ENCODE measurements at regions of chr6 and their contacts with region 1.

Region 1: GRCh38 chr6:139250296-139251044 is 41.3 kb downstream of the TXLNB start:
- DNase-seq: peak; percentile 55 to 62 (median 60)
- H3K4me3 ChIP-seq: peak overlapping the region in 1 of 2 donors; percentile 1
- H3K4me3 Mint-ChIP-seq: peak overlapping the region; percentile 16 to 90 (median 69)
- H3K27ac ChIP-seq: peak overlapping the region; percentile 40
- H3K27ac Mint-ChIP-seq: peak overlapping the region; percentile 80 to 99 (median 92)
- H3K4me1 ChIP-seq: peaks cover 45% of the 10 kb centered on the region
- H3K4me1 Mint-ChIP-seq: peaks cover 40 to 51% (median 44%) of the 10 kb centered on the region in 4 donors
- H3K27me3 ChIP-seq: no peaks in the 10 kb centered on the region
- H3K27me3 Mint-ChIP-seq: no peaks in the 10 kb centered on the region

Region 2: GRCh38 chr6:139240161-139241010 is 10.1 kb before region 1 on chr6:
- CTCF ChIA-PET with region 1: interaction called, 10 read pairs
- POLR2A ChIA-PET with region 1: interaction called, 3 read pairs
- intact Hi-C with region 1: no loop called
- DNase-seq: no peak
- H3K4me3 ChIP-seq: no peak overlapping the region
- H3K4me3 Mint-ChIP-seq: no peak overlapping the region
- H3K27ac ChIP-seq: no peak overlapping the region
- H3K27ac Mint-ChIP-seq: peak overlapping the region in 1 of 7 donors; percentile 1
- H3K4me1 ChIP-seq: no peaks in the 10 kb centered on the region
- H3K4me1 Mint-ChIP-seq: peaks cover 6 to 12% (median 9%) of the 10 kb centered on the region in 4 donors
- H3K27me3 ChIP-seq: no peaks in the 10 kb centered on the region
- H3K27me3 Mint-ChIP-seq: no peaks in the 10 kb centered on the region

Region 3: GRCh38 chr6:139262519-139263300 is 12.2 kb after region 1 on chr6:
- CTCF ChIA-PET with region 1: interaction called, 26 read pairs
- POLR2A ChIA-PET with region 1: interaction called, 7 read pairs
- intact Hi-C with region 1: no loop called
- DNase-seq: peak; percentile 53 to 62 (median 59)
- H3K4me3 ChIP-seq: peak overlapping the region in 1 of 2 donors; percentile 22
- H3K4me3 Mint-ChIP-seq: peak overlapping the region; percentile 74 to 86 (median 82)
- H3K27ac ChIP-seq: peak overlapping the region; percentile 44
- H3K27ac Mint-ChIP-seq: peak overlapping the region; percentile 59 to 96 (median 90)
- H3K4me1 ChIP-seq: peaks cover 39% of the 10 kb centered on the region
- H3K4me1 Mint-ChIP-seq: peaks cover 34 to 56% (median 39%) of the 10 kb centered on the region in 4 donors
- H3K27me3 ChIP-seq: no peaks in the 10 kb centered on the region
- H3K27me3 Mint-ChIP-seq: no peaks in the 10 kb centered on the region

Region 4: GRCh38 chr6:139323511-139324300 is 73.2 kb after region 1 on chr6:
- CTCF ChIA-PET with region 1: interaction called, 8 read pairs
- POLR2A ChIA-PET with region 1: interaction called, 4 read pairs
- intact Hi-C with region 1: loop called (anchors 5 kb)
- DNase-seq: peak; percentile 86 to 91 (median 89)
- H3K4me3 ChIP-seq: peak overlapping the region; percentile 33 to 61
- H3K4me3 Mint-ChIP-seq: peak overlapping the region; percentile 78 to 92 (median 88)
- H3K27ac ChIP-seq: peak overlapping the region; percentile 87
- H3K27ac Mint-ChIP-seq: peak overlapping the region; percentile 98 to 100 (median 98)
- H3K4me1 ChIP-seq: peaks cover 35% of the 10 kb centered on the region
- H3K4me1 Mint-ChIP-seq: peaks cover 21 to 43% (median 34%) of the 10 kb centered on the region in 4 donors
- H3K27me3 ChIP-seq: no peaks in the 10 kb centered on the region
- H3K27me3 Mint-ChIP-seq: no peaks in the 10 kb centered on the region